MCF 10A (cell line): ENCODE measurements at regions of chr5 and their contacts with region 1.

Region 1: DNA sequence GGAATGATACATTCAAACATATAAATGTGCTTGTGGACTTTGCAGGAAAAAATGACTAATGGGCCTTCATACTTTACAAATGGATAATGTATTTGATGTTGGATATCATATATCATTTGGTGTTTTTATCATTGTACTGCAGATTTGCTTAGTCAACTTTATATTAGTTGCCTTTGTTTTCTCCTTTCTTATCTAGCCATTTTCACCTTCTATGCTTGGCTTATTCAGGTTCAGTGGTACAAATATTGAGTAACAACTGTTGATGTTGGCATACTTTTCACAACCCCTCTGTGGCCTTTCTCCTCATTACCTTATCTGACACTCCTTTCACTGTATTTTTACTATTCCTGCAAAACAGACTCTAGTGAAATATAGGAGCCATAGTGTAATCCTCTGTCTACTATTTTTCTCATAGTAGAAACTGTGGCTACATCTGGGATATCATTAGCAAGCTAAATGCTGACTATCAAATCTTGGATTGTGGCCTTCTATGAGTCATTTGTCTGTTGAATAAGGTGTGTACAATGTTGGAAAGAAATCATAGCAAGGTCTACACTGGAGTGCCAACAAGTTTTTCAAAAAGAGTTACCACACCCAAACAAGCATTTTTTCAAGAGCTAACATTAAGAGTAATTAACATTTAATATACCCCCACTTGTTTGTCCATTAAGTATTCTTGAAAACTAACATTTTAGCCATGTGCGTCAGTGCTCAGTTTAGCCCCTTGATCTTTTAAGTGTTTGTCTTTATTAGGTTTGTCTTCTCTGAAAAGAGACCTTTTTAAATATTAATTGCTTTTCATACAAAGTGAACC is 330.1 kb downstream of the ADGRV1 start:
- DNase-seq: peak; percentile 86
- H3K4me3 Mint-ChIP-seq: no peak overlapping the region
- H3K27ac Mint-ChIP-seq: peak overlapping the region; percentile 46
- H3K4me1 Mint-ChIP-seq: peaks cover 25% of the 10 kb centered on the region
- H3K27me3 Mint-ChIP-seq: no peaks in the 10 kb centered on the region
- CTCF ChIP-seq: no peak

Region 2: GRCh38 chr5:90843443-90843842 is 45.3 kb before region 1 on chr5:
- CTCF ChIA-PET with region 1: no interaction called
- POLR2A ChIA-PET with region 1: no interaction called
- intact Hi-C with region 1: no loop called
- DNase-seq: no peak
- H3K4me3 Mint-ChIP-seq: no peak overlapping the region
- H3K27ac Mint-ChIP-seq: no peak overlapping the region
- H3K4me1 Mint-ChIP-seq: no peaks in the 10 kb centered on the region
- H3K27me3 Mint-ChIP-seq: no peaks in the 10 kb centered on the region
- CTCF ChIP-seq: no peak

Region 3: GRCh38 chr5:90873033-90873517 is 15.6 kb before region 1 on chr5:
- CTCF ChIA-PET with region 1: interaction called, 4 read pairs
- POLR2A ChIA-PET with region 1: interaction called, 26 read pairs
- intact Hi-C with region 1: no loop called
- DNase-seq: peak; percentile 44
- H3K4me3 Mint-ChIP-seq: no peak overlapping the region
- H3K27ac Mint-ChIP-seq: peak overlapping the region; percentile 28
- H3K4me1 Mint-ChIP-seq: peaks cover 14% of the 10 kb centered on the region
- H3K27me3 Mint-ChIP-seq: no peaks in the 10 kb centered on the region
- CTCF ChIP-seq: no peak